ENCODE measurements at regions of chr11 and their contacts with region 1.

Region 1: GRCh38 chr11:107898270-107898669 is 30.0 kb upstream of the RAB39A start:
- DNase-seq: peak; percentile 70
- H3K4me3 ChIP-seq: no peak overlapping the region
- H3K27ac ChIP-seq: no peak overlapping the region
- H3K4me1 ChIP-seq: no peaks in the 10 kb centered on the region
- H3K27me3 ChIP-seq: peaks cover 5 to 8% of the 10 kb centered on the region in 2 experiments
- CTCF ChIP-seq: peak; percentile 43 to 56
- POLR2A ChIP-seq: no peak

Region 2: GRCh38 chr11:107696140-107696539 is 202.1 kb before region 1 on chr11:
- CTCF ChIA-PET with region 1: interaction called, 3 read pairs
- POLR2A ChIA-PET with region 1: no interaction called
- dilution Hi-C with region 1: no loop called
- intact Hi-C with region 1: loop called (anchors 5 kb)
- DNase-seq: peak; percentile 90
- H3K4me3 ChIP-seq: no peak overlapping the region
- H3K27ac ChIP-seq: peak overlapping the region; percentile 15
- H3K4me1 ChIP-seq: peaks cover 16% of the 10 kb centered on the region
- H3K27me3 ChIP-seq: no peaks in the 10 kb centered on the region
- CTCF ChIP-seq: no peak
- POLR2A ChIP-seq: no peak

Region 3: DNA sequence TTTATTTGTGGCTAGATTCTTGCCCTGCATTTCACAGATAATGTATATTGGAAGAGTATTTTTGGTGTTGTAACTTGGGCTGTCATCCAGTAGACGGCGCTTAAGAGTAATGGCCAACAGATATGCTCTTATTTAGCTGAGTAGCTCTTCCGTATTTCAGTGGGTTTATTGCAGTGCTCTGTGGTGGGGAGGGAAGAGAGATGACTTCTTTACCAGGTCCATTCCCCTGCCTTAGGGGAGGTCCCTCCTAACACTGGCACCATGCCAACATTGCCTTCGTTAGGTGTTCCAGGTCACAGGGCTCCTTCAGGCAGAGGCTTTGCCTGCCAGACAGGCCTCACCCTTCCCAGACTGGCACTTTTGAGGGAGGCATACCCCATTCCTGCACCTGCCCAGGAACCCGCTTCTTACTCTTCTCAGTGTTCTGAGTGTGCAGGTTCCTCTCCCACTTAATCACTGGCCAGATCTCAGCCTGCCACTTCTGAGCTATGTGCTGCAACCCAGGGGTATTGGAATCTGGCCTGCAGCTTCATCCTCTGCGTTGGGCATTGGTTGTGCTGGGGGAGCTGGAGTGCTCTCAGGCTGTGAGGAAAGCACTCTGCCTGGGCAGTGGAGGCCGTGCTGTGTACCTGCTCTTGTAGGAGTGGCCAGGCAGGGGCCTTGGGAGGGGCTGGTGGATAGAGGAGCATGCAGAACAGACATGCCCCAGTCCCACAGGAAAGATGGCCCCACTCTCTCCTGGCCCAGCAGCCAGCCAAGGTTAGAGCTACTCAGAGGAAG is 157.0 kb before region 1 on chr11:
- CTCF ChIA-PET with region 1: interaction called, 110 read pairs
- POLR2A ChIA-PET with region 1: no interaction called
- dilution Hi-C with region 1: no loop called
- intact Hi-C with region 1: loop called (anchors 1 kb)
- DNase-seq: peak; percentile 48
- H3K4me3 ChIP-seq: no peak overlapping the region
- H3K27ac ChIP-seq: no peak overlapping the region
- H3K4me1 ChIP-seq: no peaks in the 10 kb centered on the region
- H3K27me3 ChIP-seq: peaks cover 5 to 20% of the 10 kb centered on the region in 2 experiments
- CTCF ChIP-seq: peak; percentile 63 to 73
- POLR2A ChIP-seq: no peak

Region 4: DNA sequence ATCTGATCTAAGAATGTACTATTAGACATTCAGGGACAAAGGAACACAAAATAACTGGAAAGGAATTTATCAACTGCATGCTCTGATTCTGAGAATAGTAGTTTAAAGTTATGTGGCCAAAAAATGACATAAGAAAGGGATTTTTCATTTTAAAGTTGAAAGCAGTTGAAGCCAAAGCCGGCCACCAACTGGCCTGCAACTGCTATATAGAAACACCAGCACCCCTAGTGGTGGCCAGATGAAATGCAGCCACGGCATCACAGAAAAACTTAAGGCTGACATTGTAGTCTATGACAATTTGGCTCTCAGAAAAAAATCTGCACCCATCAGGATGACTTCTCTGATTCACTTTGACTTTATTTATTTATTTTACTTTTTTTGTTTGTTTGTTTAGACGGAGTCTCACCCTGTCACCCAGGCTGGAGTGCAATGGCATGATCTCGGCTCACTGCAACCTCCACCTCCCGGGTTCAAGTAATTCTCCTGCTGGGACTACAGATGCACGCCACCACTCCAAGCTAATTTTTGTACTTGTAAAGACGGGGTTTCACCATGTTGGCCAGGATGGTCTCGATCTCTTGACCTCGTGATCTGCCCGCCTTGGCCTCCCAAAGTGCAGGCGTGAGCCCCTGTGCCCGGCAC is 98.9 kb before region 1 on chr11:
- CTCF ChIA-PET with region 1: interaction called, 5 read pairs
- POLR2A ChIA-PET with region 1: no interaction called
- dilution Hi-C with region 1: no loop called
- intact Hi-C with region 1: loop called (anchors 1 kb)
- DNase-seq: peak; percentile 65
- H3K4me3 ChIP-seq: no peak overlapping the region
- H3K27ac ChIP-seq: no peak overlapping the region
- H3K4me1 ChIP-seq: no peaks in the 10 kb centered on the region
- H3K27me3 ChIP-seq: no peaks in the 10 kb centered on the region
- CTCF ChIP-seq: peak; percentile 86 to 88
- POLR2A ChIP-seq: no peak

Measured in endothelial cell of umbilical vein (primary cell).